Natural killer cell (primary cell): ENCODE measurements at regions of chr3 and their contacts with region 1.

Region 1: GRCh38 chr3:111616417-111617105 is 21.4 kb upstream of the ZBED2 start:
- DNase-seq: peak; percentile 27 to 88
- ATAC-seq: peak; percentile 87 to 90 (median 89)
- H3K4me3 ChIP-seq: no peak overlapping the region
- H3K4me3 Mint-ChIP-seq: peak overlapping the region; percentile 7
- H3K27ac ChIP-seq: peak overlapping the region; percentile 59
- H3K27ac Mint-ChIP-seq: peak overlapping the region; percentile 84 to 90
- H3K4me1 ChIP-seq: peaks cover 23% of the 10 kb centered on the region
- H3K4me1 Mint-ChIP-seq: peaks cover 36 to 60% of the 10 kb centered on the region in 2 donors
- H3K27me3 ChIP-seq: no peaks in the 10 kb centered on the region
- H3K27me3 Mint-ChIP-seq: no peaks in the 10 kb centered on the region
- CTCF ChIP-seq: peak; percentile 38

Region 2: GRCh38 chr3:109806929-109807328 is 1809.6 kb before region 1 on chr3:
- intact Hi-C with region 1: loop called (anchors 10 kb)
- DNase-seq: peak in 1 of 2 donors; percentile 82
- ATAC-seq: peak; percentile 80 to 93 (median 90)
- H3K4me3 ChIP-seq: no peak overlapping the region
- H3K4me3 Mint-ChIP-seq: peak overlapping the region; percentile 80
- H3K27ac ChIP-seq: peak overlapping the region; percentile 81
- H3K27ac Mint-ChIP-seq: peak overlapping the region; percentile 87 to 90
- H3K4me1 ChIP-seq: peaks cover 27% of the 10 kb centered on the region
- H3K4me1 Mint-ChIP-seq: peaks cover 41 to 55% of the 10 kb centered on the region in 2 donors
- H3K27me3 ChIP-seq: no peaks in the 10 kb centered on the region
- H3K27me3 Mint-ChIP-seq: no peaks in the 10 kb centered on the region
- CTCF ChIP-seq: no peak

Region 3: GRCh38 chr3:111392901-111393351 is 223.6 kb before region 1 on chr3:
- intact Hi-C with region 1: loop called (anchors 5 kb)
- DNase-seq: peak; percentile 28 to 83
- ATAC-seq: peak; percentile 98 to 100 (median 98)
- H3K4me3 ChIP-seq: no peak overlapping the region
- H3K4me3 Mint-ChIP-seq: peak overlapping the region; percentile 60
- H3K27ac ChIP-seq: no peak overlapping the region
- H3K27ac Mint-ChIP-seq: peak overlapping the region; percentile 65 to 83
- H3K4me1 ChIP-seq: no peaks in the 10 kb centered on the region
- H3K4me1 Mint-ChIP-seq: peaks cover 16% of the 10 kb centered on the region in 2 donors
- H3K27me3 ChIP-seq: no peaks in the 10 kb centered on the region
- H3K27me3 Mint-ChIP-seq: peaks cover 0 to 3% of the 10 kb centered on the region in 2 donors
- CTCF ChIP-seq: no peak

Region 4: GRCh38 chr3:111577794-111578685 is 38.5 kb before region 1 on chr3:
- intact Hi-C with region 1: loop called (anchors 5 kb)
- DNase-seq: peak in 1 of 2 donors; percentile 64
- ATAC-seq: peak; percentile 72 to 88 (median 83)
- H3K4me3 ChIP-seq: no peak overlapping the region
- H3K4me3 Mint-ChIP-seq: no peak overlapping the region
- H3K27ac ChIP-seq: no peak overlapping the region
- H3K27ac Mint-ChIP-seq: peak overlapping the region; percentile 69 to 78
- H3K4me1 ChIP-seq: peaks cover 7% of the 10 kb centered on the region
- H3K4me1 Mint-ChIP-seq: peaks cover 46 to 48% of the 10 kb centered on the region in 2 donors
- H3K27me3 ChIP-seq: no peaks in the 10 kb centered on the region
- H3K27me3 Mint-ChIP-seq: no peaks in the 10 kb centered on the region
- CTCF ChIP-seq: peak; percentile 19